Psoas muscle (tissue), 8 donors: ENCODE measurements at regions of chr22 and their contacts with region 1.

Region 1: GRCh38 chr22:40055143-40055883 is 60.6 kb downstream of the FAM83F start:
- DNase-seq: no peak
- ATAC-seq: no peak
- H3K4me3 ChIP-seq: no peak overlapping the region
- H3K27ac ChIP-seq: no peak overlapping the region
- H3K4me1 ChIP-seq: peaks cover 60% of the 10 kb centered on the region
- H3K27me3 ChIP-seq: no peaks in the 10 kb centered on the region
- CTCF ChIP-seq: no peak

Region 2: DNA sequence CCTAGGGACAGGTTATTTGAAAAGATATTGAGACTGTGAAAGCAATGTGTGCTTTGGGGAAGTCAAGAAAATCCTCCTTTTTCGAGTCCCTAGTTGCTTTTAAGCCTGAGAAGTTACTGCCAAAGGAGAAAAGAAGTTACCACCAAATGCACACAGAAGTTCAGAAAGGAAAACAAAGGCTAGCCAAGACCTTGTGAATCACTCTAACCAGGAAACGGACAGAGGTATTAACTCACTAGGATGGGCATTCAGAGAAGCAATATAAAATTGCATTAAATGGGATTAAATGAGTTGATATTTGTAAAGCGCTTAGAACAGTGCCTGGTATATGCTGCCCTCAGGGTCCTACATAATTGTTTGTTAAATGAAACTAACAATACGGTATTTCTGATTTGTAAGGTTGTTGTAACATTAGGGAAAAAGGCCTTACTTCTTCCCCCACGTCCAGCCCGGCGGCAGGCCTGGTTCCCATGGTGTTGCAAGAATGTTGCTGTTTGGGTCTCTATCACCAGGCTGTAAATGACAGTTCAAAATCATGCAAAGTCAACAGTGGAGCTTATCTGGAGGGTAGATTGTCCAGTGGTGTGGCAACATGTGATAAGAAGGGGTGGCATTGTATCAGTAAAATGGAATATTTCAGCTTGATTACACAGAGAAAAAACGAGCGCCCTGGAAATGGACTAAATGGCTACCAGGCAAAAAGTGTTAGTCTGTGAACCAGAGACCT is 88.0 kb before region 1 on chr22:
- intact Hi-C with region 1: no loop called
- DNase-seq: no peak
- ATAC-seq: no peak
- H3K4me3 ChIP-seq: no peak overlapping the region
- H3K27ac ChIP-seq: no peak overlapping the region
- H3K4me1 ChIP-seq: no peaks in the 10 kb centered on the region
- H3K27me3 ChIP-seq: peaks cover 0 to 12% (median 0%) of the 10 kb centered on the region in 3 donors
- CTCF ChIP-seq: no peak

Region 3: DNA sequence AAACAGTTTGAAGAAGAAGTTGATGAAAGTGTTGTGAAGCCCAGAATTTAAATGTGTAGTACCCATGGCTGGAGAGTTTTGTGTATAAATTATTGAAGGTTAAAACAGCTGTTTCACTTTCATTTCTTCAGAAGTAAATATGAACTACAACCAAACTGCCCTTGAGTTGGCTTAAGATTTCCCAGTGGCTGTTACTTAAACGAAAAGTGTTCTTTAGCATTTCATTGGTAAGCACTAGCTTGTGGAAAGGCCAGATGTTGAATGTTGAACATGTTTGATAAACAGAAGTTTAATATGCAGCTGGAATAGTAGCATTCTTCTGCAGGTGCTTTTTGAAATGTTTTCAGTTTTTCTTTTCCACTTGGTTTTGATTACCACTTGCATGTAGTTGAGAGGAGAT is 39.2 kb after region 1 on chr22:
- intact Hi-C with region 1: loop called in 1 of 2 experiments (anchors 5 kb)
- DNase-seq: no peak
- ATAC-seq: no peak
- H3K4me3 ChIP-seq: peak overlapping the region; percentile 8
- H3K27ac ChIP-seq: no peak overlapping the region
- H3K4me1 ChIP-seq: peaks cover 32% of the 10 kb centered on the region
- H3K27me3 ChIP-seq: no peaks in the 10 kb centered on the region
- CTCF ChIP-seq: no peak

Region 4: DNA sequence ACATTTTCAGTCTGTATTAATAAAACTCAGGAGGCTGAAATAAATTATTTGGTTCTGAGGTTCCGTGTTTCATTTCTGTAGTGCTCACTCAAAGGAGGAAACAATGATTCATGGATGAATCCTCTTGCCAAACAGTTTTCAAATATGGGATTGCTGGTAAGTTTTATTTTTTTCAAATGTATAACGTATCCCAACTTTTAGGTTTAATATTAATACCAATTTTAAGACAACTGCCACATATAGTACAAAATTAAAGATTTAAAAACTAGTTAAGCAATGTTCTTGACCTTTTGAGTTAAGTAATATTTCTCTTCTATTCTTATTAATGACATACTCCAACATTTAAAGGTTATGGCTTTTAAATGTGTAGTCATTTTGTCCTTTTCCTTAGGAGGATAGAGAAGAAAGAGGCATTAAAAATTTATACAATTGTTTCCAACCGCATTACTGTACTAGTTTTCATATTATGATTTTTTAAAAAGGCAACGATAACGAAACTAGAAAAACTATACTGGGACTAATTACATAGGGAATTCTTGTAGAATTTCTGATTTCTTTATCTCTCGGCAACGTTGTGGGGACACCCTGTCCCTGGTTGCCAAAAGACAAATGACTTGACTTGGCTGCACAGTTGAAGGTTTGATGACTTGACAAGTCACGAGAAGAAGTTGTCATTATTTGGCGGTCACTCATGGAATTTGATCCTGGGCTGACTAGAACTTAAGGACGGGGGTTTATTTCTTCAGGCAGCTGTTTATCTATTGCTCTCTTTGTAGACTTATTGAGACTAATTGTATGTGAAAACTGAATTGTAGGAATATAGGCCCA is 221.9 kb after region 1 on chr22:
- intact Hi-C with region 1: loop called in 1 of 2 experiments (anchors 10 kb)
- DNase-seq: peak in 1 of 2 donors; percentile 32
- ATAC-seq: peak; percentile 91 to 94 (median 92)
- H3K4me3 ChIP-seq: peak overlapping the region; percentile 54
- H3K27ac ChIP-seq: peak overlapping the region; percentile 87
- H3K4me1 ChIP-seq: peaks cover 17% of the 10 kb centered on the region
- H3K27me3 ChIP-seq: no peaks in the 10 kb centered on the region
- CTCF ChIP-seq: no peak

Region 5: GRCh38 chr22:40346178-40347118 is 291.1 kb after region 1 on chr22 and contains the start of gene ADSL:
- intact Hi-C with region 1: loop called in 1 of 2 experiments (anchors 5 kb)
- DNase-seq: peak; percentile 92 to 95
- ATAC-seq: peak; percentile 91 to 94 (median 92)
- H3K4me3 ChIP-seq: peak within 1 kb of the TSS; percentile 92
- H3K27ac ChIP-seq: peak within 1 kb of the TSS; percentile 97
- H3K4me1 ChIP-seq: peaks cover 53% of the 10 kb centered on the region
- H3K27me3 ChIP-seq: no peaks in the 10 kb centered on the region
- CTCF ChIP-seq: no peak
- total RNA-seq, gene ADSL: 114 to 170 (median 141) TPM